Caco-2 (cell line): ENCODE measurements at regions of chr19 and their contacts with region 1.

Region 1: DNA sequence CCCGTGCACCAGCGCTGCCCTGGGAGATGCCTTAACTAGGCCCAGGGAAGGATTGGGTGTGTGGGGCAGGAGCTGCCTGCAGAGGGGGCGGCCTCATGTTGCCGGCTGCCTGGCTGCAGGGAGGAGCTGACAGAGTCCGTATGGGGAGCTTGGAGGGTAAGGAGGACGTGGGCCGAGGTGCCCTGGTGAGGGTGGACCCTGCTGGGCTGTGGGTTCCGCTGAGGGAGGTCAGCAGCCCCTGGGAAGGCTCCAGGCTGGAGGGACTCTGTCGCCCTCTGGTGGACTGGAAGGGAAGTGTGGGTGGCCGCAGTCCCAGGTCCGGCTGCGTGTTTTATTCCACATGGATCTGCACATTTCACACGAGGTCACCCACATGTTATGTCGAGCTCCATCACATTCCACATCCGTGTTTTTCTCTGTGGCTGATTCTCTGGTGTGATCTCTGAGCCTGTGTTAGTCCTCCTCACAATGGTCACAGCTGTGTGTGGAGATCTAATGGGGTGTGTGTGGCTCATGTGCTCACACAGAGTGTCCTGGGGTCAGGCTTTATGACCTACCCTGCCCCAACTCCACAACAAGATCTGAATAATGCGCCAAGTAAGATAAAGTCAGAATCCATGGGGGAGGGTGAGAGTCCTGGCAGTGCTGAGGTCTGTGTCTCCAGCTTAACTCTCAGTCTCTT is 1.8 kb upstream of the CEACAM8 start:
- DNase-seq: peak in 1 of 2 experiments; percentile 69
- H3K4me3 ChIP-seq: no peak overlapping the region
- H3K4me3 Mint-ChIP-seq: no peak overlapping the region
- H3K27ac Mint-ChIP-seq: no peak overlapping the region
- H3K4me1 ChIP-seq: no peaks in the 10 kb centered on the region
- H3K4me1 Mint-ChIP-seq: no peaks in the 10 kb centered on the region
- H3K27me3 ChIP-seq: no peaks in the 10 kb centered on the region
- H3K27me3 Mint-ChIP-seq: peaks cover 3% of the 10 kb centered on the region
- CTCF ChIP-seq: peak; percentile 94 to 98

Region 2: GRCh38 chr19:42563352-42564210 is 33.0 kb before region 1 on chr19:
- CTCF ChIA-PET with region 1: interaction called, 6 read pairs
- POLR2A ChIA-PET with region 1: no interaction called
- intact Hi-C with region 1: loop called (anchors 1 kb)
- DNase-seq: peak; percentile 60 to 63
- H3K4me3 ChIP-seq: no peak overlapping the region
- H3K4me3 Mint-ChIP-seq: no peak overlapping the region
- H3K27ac Mint-ChIP-seq: no peak overlapping the region
- H3K4me1 ChIP-seq: no peaks in the 10 kb centered on the region
- H3K4me1 Mint-ChIP-seq: no peaks in the 10 kb centered on the region
- H3K27me3 ChIP-seq: no peaks in the 10 kb centered on the region
- H3K27me3 Mint-ChIP-seq: peaks cover 8% of the 10 kb centered on the region
- CTCF ChIP-seq: peak; percentile 76 to 87

Region 3: GRCh38 chr19:42573642-42574041 is 22.9 kb before region 1 on chr19:
- CTCF ChIA-PET with region 1: no interaction called
- POLR2A ChIA-PET with region 1: no interaction called
- intact Hi-C with region 1: no loop called
- DNase-seq: no peak
- H3K4me3 ChIP-seq: no peak overlapping the region
- H3K4me3 Mint-ChIP-seq: no peak overlapping the region
- H3K27ac Mint-ChIP-seq: no peak overlapping the region
- H3K4me1 ChIP-seq: peaks cover 10% of the 10 kb centered on the region
- H3K4me1 Mint-ChIP-seq: no peaks in the 10 kb centered on the region
- H3K27me3 ChIP-seq: no peaks in the 10 kb centered on the region
- H3K27me3 Mint-ChIP-seq: no peaks in the 10 kb centered on the region
- CTCF ChIP-seq: no peak